Breast epithelium (tissue), 4 donors: ENCODE measurements at regions of chr12 and their contacts with region 1.

Region 1: DNA sequence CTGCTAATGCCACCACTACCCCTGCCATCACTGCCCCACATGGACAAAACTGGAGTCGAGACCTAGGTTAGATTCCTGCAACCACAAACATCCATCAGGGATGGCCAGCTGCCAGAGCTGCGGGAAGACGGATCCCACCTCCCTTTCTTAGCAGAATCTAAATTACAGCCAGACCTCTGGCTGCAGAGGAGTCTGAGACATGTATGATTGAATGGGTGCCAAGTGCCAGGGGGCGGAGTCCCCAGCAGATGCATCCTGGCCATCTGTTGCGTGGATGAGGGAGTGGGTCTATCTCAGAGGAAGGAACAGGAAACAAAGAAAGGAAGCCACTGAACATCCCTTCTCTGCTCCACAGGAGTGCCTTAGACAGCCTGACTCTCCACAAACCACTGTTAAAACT is 7.1 kb upstream of the OAS2 start:
- DNase-seq: no peak
- H3K4me3 ChIP-seq: no peak overlapping the region
- H3K27ac ChIP-seq: no peak overlapping the region
- H3K4me1 ChIP-seq: no peaks in the 10 kb centered on the region
- H3K27me3 ChIP-seq: no peaks in the 10 kb centered on the region
- CTCF ChIP-seq: no peak
- POLR2A ChIP-seq: no peak

Region 2: GRCh38 chr12:111056618-111057521 is 1914.4 kb before region 1 on chr12:
- intact Hi-C with region 1: no loop called
- DNase-seq: no peak
- H3K4me3 ChIP-seq: no peak overlapping the region
- H3K27ac ChIP-seq: peak overlapping the region in 1 of 2 donors; percentile 38
- H3K4me1 ChIP-seq: no peaks in the 10 kb centered on the region
- H3K27me3 ChIP-seq: no peaks in the 10 kb centered on the region
- CTCF ChIP-seq: no peak
- POLR2A ChIP-seq: no peak

Region 3: DNA sequence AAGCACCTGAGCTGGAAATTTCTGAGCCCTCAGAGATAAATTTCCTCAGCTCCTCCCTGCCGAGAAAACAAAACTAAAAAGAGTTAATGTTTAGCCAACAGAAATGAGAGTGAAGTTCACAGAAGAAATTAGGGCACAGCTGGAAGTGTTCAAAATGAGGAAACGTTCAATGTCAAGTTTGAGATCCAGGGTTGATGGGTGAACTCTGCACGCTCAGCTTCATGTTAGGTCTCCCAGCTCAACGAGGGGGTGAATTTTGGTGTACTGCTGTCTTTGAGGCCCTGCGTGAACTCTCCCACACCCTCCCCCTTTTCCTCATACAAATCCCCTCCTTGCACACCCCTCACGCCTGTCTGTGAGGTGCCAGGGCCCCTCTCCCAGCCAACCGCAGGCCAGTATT is 46.3 kb before region 1 on chr12:
- intact Hi-C with region 1: loop called (anchors 2 kb)
- DNase-seq: no peak
- H3K4me3 ChIP-seq: no peak overlapping the region
- H3K27ac ChIP-seq: no peak overlapping the region
- H3K4me1 ChIP-seq: no peaks in the 10 kb centered on the region
- H3K27me3 ChIP-seq: no peaks in the 10 kb centered on the region
- CTCF ChIP-seq: no peak
- POLR2A ChIP-seq: no peak